CD8-positive, alpha-beta T cell (primary cell): ENCODE measurements at regions of chr17 and their contacts with region 1.

Region 1: DNA sequence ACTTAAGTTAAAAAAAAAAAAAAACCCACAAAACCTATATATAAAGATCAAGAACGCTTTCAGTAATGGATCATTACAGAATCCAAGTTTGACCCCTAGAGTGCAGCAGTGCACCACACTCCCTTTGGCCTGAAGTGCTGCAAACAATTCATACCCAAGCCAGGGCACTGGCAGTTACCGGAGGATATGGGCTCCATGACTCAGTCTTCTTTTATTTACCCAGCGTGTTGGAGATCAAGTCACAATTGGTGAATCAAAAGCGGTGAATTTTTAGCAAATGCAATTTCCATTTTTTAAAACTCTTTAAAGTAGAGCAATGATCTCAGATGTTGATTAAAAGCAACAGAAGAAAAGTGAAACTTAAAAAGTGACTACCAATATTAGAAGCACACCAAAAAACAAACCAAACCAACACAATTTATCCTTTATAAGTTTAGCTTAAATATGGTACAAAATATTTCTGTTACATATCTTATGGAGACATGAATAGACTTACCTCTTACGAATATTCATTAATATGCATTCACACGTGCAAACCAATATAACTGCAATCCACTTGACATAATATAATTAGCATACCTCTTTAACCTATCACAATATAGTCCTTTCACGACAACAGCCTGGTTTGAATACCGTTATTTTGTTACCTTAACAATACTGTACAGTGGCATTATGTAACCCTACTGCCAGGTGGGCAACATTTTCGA is 46.3 kb downstream of the ZNF652 start:
- DNase-seq: peak; percentile 54 to 89 (median 80)
- ATAC-seq: peak; percentile 100
- H3K4me3 ChIP-seq: no peak overlapping the region
- H3K4me3 Mint-ChIP-seq: peak overlapping the region; percentile 69
- H3K27ac ChIP-seq: peak overlapping the region in 1 of 2 experiments; percentile 38
- H3K27ac Mint-ChIP-seq: peak overlapping the region; percentile 84
- H3K4me1 ChIP-seq: peaks cover 10% of the 10 kb centered on the region
- H3K4me1 Mint-ChIP-seq: peaks cover 23% of the 10 kb centered on the region
- H3K27me3 ChIP-seq: no peaks in the 10 kb centered on the region
- H3K27me3 Mint-ChIP-seq: no peaks in the 10 kb centered on the region
- CTCF ChIP-seq: peak; percentile 95

Region 2: GRCh38 chr17:48663134-48663924 is 652.4 kb before region 1 on chr17:
- CTCF ChIA-PET with region 1: no interaction called
- POLR2A ChIA-PET with region 1: no interaction called
- intact Hi-C with region 1: no loop called
- DNase-seq: no peak
- ATAC-seq: no peak
- H3K4me3 ChIP-seq: no peak overlapping the region
- H3K4me3 Mint-ChIP-seq: no peak overlapping the region
- H3K27ac ChIP-seq: no peak overlapping the region
- H3K27ac Mint-ChIP-seq: no peak overlapping the region
- H3K4me1 ChIP-seq: no peaks in the 10 kb centered on the region
- H3K4me1 Mint-ChIP-seq: no peaks in the 10 kb centered on the region
- H3K27me3 ChIP-seq: no peaks in the 10 kb centered on the region
- H3K27me3 Mint-ChIP-seq: peaks cover 17% of the 10 kb centered on the region
- CTCF ChIP-seq: no peak

Region 3: GRCh38 chr17:49337884-49338283 is 22.2 kb after region 1 on chr17:
- CTCF ChIA-PET with region 1: interaction called, 12 read pairs
- POLR2A ChIA-PET with region 1: interaction called, 5 read pairs
- intact Hi-C with region 1: loop called in 1 of 2 experiments (anchors 2 kb)
- DNase-seq: peak in 1 of 9 experiments; percentile 21
- ATAC-seq: no peak
- H3K4me3 ChIP-seq: no peak overlapping the region
- H3K4me3 Mint-ChIP-seq: no peak overlapping the region
- H3K27ac ChIP-seq: no peak overlapping the region
- H3K27ac Mint-ChIP-seq: peak overlapping the region; percentile 25
- H3K4me1 ChIP-seq: peaks cover 39% of the 10 kb centered on the region
- H3K4me1 Mint-ChIP-seq: peaks cover 60% of the 10 kb centered on the region
- H3K27me3 ChIP-seq: no peaks in the 10 kb centered on the region
- H3K27me3 Mint-ChIP-seq: no peaks in the 10 kb centered on the region
- CTCF ChIP-seq: no peak

Region 4: GRCh38 chr17:49370971-49371834 is 55.5 kb after region 1 on chr17:
- CTCF ChIA-PET with region 1: interaction called, 262 read pairs
- POLR2A ChIA-PET with region 1: no interaction called
- intact Hi-C with region 1: loop called (anchors 1 kb)
- DNase-seq: no peak
- ATAC-seq: no peak
- H3K4me3 ChIP-seq: no peak overlapping the region
- H3K4me3 Mint-ChIP-seq: no peak overlapping the region
- H3K27ac ChIP-seq: no peak overlapping the region
- H3K27ac Mint-ChIP-seq: no peak overlapping the region
- H3K4me1 ChIP-seq: no peaks in the 10 kb centered on the region
- H3K4me1 Mint-ChIP-seq: peaks cover 12% of the 10 kb centered on the region
- H3K27me3 ChIP-seq: no peaks in the 10 kb centered on the region
- H3K27me3 Mint-ChIP-seq: no peaks in the 10 kb centered on the region
- CTCF ChIP-seq: no peak

Region 5: DNA sequence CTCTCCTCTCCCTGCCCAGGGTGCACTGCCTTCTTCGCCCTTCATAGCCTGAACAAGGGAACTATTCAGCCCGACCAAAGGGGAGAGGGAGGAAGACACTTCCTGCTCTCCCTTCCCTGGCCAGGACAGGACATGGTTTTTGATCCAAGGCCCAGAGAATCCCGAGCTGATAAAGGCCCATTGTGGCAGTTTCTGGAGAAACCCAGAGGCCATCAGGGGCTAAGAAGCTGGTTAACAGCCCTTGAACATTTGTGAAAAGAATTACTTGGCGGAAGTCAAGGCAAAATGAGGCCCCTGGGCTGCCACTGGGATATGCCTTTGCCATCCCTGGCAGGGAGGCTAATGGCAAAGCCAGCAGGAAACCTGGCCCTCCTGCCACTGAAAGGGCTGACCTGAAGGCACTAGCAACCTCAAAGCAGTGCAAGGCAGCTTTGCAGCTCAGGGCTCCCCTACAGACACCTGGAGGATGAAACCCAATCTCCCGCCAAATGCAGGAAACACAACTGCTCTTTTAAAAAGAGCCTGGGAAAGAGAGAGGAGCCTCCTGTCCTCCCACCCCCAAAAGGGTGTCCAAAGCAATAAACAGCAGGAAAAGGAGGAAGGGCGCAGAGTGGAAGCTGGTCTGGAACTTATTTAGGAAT is 86.4 kb after region 1 on chr17:
- CTCF ChIA-PET with region 1: interaction called, 122 read pairs
- POLR2A ChIA-PET with region 1: no interaction called
- intact Hi-C with region 1: no loop called
- DNase-seq: no peak
- ATAC-seq: no peak
- H3K4me3 ChIP-seq: no peak overlapping the region
- H3K4me3 Mint-ChIP-seq: no peak overlapping the region
- H3K27ac ChIP-seq: peak overlapping the region in 1 of 2 experiments; percentile 81
- H3K27ac Mint-ChIP-seq: no peak overlapping the region
- H3K4me1 ChIP-seq: peaks cover 22% of the 10 kb centered on the region
- H3K4me1 Mint-ChIP-seq: peaks cover 24% of the 10 kb centered on the region
- H3K27me3 ChIP-seq: no peaks in the 10 kb centered on the region
- H3K27me3 Mint-ChIP-seq: no peaks in the 10 kb centered on the region
- CTCF ChIP-seq: no peak

Region 6: GRCh38 chr17:49414622-49415350 is 99.1 kb after region 1 on chr17 and contains the start of gene PHB1:
- CTCF ChIA-PET with region 1: interaction called, 10 read pairs
- POLR2A ChIA-PET with region 1: no interaction called
- intact Hi-C with region 1: no loop called
- DNase-seq: peak; percentile 86 to 98 (median 94)
- ATAC-seq: peak; percentile 98
- H3K4me3 ChIP-seq: peak within 1 kb of the TSS; percentile 80 to 96
- H3K4me3 Mint-ChIP-seq: peak within 1 kb of the TSS; percentile 99
- H3K27ac ChIP-seq: peak within 1 kb of the TSS; percentile 43 to 61
- H3K27ac Mint-ChIP-seq: peak within 1 kb of the TSS; percentile 93
- H3K4me1 ChIP-seq: peaks cover 12% of the 10 kb centered on the region
- H3K4me1 Mint-ChIP-seq: peaks cover 31% of the 10 kb centered on the region
- H3K27me3 ChIP-seq: no peaks in the 10 kb centered on the region
- H3K27me3 Mint-ChIP-seq: no peaks in the 10 kb centered on the region
- CTCF ChIP-seq: no peak
- total RNA-seq, gene PHB1: 26.3 to 27.0 TPM